ENCODE measurements at regions of chr13 and their contacts with region 1.

Region 1: DNA sequence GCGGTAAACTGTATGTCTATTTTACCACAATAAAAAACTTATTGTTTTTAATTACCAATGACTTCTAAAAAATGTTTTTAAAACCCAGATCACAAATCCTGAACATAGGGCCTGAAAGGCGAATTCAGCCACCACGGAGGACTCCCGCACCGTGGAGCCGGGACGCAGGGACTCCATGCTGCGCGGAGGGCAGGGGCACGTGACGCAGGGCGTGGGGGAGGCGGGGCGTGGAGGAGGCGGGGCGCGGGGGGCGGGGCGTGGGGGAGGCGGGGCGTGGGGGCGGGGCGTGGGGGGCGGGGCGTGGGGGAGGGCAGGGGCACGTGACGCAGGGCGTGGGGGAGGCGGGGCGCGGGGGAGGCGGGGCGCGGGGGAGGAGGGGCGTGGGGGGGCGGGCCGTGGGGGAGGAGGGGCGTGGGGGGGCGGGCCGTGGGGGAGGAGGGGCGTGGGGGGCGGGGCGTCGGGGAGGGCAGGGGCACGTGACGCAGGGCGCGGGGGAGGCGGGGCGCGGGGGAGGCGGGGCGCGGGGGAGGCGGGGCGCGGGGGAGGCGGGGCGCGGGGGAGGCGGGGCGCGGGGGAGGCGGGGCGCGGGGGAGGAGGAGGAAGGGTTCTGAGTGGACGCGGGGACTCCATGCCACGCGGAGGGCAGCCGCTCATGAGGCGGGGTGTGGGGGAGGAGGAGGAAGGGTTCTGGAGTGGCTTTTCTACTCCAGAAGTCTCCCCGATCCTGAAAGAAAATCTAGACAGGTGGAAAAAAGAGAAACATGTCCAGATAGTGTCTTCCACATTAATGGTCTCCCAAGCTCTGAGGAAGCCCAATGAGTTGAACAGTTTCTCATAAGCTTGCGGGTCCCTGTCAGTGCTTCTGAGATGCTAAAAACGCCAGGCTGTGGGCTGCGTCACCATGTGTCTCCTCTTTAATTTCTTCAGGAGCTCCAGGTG is 4.4 kb upstream of the PROZ start:
- DNase-seq: peak; percentile 70
- H3K4me3 Mint-ChIP-seq: peak overlapping the region; percentile 69
- H3K27ac Mint-ChIP-seq: peak overlapping the region; percentile 14
- H3K4me1 Mint-ChIP-seq: peaks cover 16% of the 10 kb centered on the region
- H3K27me3 Mint-ChIP-seq: peaks cover 2% of the 10 kb centered on the region

Region 2: GRCh38 chr13:112781881-112782361 is 372.2 kb before region 1 on chr13:
- CTCF ChIA-PET with region 1: no interaction called
- POLR2A ChIA-PET with region 1: no interaction called
- intact Hi-C with region 1: no loop called
- DNase-seq: no peak
- H3K4me3 Mint-ChIP-seq: no peak overlapping the region
- H3K27ac Mint-ChIP-seq: no peak overlapping the region
- H3K4me1 Mint-ChIP-seq: peaks cover 9% of the 10 kb centered on the region
- H3K27me3 Mint-ChIP-seq: no peaks in the 10 kb centered on the region

Region 3: GRCh38 chr13:112968908-112969691 is 185.0 kb before region 1 on chr13 and contains the start of gene MCF2L:
- CTCF ChIA-PET with region 1: no interaction called
- POLR2A ChIA-PET with region 1: no interaction called
- intact Hi-C with region 1: loop called (anchors 10 kb)
- DNase-seq: peak; percentile 75
- H3K4me3 Mint-ChIP-seq: peak within 1 kb of the TSS; percentile 82
- H3K27ac Mint-ChIP-seq: peak within 1 kb of the TSS; percentile 75
- H3K4me1 Mint-ChIP-seq: peaks cover 18% of the 10 kb centered on the region
- H3K27me3 Mint-ChIP-seq: no peaks in the 10 kb centered on the region
- total RNA-seq, gene MCF2L: 7.1 to 8.0 TPM

Region 4: DNA sequence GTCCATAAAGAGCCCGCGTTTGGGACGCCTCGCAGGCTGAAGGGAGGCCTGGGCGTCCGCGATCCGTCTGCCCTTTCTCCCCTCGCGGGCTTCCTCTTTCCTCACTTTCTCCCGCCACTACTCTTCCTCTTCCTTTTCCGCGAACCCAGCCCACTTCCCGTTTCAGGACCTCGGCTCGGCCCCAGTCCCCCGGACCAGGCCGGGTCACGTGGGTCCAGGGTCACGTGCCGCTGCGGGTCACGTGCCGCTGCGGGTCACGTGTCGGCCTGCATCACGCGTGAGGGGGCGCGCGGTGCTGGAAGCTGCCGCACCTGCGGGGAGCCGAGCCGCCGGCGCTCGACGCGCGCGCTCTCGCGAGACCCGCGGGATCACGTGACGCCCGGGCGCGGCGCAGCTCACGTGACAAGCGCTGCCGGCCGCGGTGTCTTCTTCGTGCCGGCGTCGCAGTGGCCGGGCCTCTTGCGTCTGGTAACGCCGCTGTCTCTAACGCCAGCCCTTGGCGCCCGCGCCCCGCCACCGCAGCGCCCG is 142.8 kb after region 1 on chr13 and contains the start of gene LAMP1:
- CTCF ChIA-PET with region 1: no interaction called
- POLR2A ChIA-PET with region 1: no interaction called
- intact Hi-C with region 1: loop called (anchors 2 kb)
- DNase-seq: peak; percentile 98
- H3K4me3 Mint-ChIP-seq: peak within 1 kb of the TSS; percentile 98
- H3K27ac Mint-ChIP-seq: peak within 1 kb of the TSS; percentile 98
- H3K4me1 Mint-ChIP-seq: peaks cover 35% of the 10 kb centered on the region
- H3K27me3 Mint-ChIP-seq: peaks cover 12% of the 10 kb centered on the region
- total RNA-seq, gene LAMP1: 45.9 to 46.8 TPM

Region 5: DNA sequence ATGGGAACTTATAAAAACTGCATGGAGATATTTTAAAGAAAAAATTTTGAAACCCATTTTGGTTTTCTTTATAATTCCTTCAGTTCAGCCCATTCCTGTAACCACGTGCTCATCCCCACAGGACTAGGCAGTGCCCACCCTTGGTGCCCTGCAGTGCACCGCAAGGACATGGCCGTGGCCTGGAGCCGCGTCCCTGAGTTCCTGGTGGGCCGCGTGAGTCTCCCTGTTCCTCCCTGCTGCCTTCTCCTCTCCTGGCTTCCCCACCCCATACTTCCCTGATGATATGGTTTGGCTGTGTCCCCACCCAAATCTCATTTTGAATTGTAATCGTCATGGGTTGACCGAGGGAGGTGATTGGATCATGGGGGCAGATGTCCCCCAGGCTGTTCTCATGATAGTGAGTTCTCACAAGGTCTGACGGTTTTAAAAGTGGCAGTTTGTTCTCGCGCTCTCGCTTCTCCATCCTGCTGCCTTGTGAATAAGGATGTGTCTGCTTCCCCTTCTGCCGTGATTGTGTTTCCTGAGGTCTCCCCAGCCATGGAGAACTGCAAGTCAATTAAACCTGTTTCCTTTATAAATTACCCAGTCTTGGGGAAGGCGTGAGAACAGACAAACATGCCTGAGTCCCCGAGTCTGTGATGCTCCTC is 398.8 kb after region 1 on chr13:
- CTCF ChIA-PET with region 1: no interaction called
- POLR2A ChIA-PET with region 1: no interaction called
- intact Hi-C with region 1: no loop called
- DNase-seq: no peak
- H3K4me3 Mint-ChIP-seq: no peak overlapping the region
- H3K27ac Mint-ChIP-seq: no peak overlapping the region
- H3K4me1 Mint-ChIP-seq: no peaks in the 10 kb centered on the region
- H3K27me3 Mint-ChIP-seq: no peaks in the 10 kb centered on the region